Lower leg skin (tissue), 4 donors: ENCODE measurements at regions of chr6 and their contacts with region 1.

Region 1: GRCh38 chr6:44172731-44173500 is 14.3 kb downstream of the CAPN11 start:
- DNase-seq: peak; percentile 86 to 97
- H3K4me3 ChIP-seq: no peak overlapping the region
- CTCF ChIP-seq: peak in 1 of 3 donors; percentile 94
- POLR2A ChIP-seq: no peak

Region 2: DNA sequence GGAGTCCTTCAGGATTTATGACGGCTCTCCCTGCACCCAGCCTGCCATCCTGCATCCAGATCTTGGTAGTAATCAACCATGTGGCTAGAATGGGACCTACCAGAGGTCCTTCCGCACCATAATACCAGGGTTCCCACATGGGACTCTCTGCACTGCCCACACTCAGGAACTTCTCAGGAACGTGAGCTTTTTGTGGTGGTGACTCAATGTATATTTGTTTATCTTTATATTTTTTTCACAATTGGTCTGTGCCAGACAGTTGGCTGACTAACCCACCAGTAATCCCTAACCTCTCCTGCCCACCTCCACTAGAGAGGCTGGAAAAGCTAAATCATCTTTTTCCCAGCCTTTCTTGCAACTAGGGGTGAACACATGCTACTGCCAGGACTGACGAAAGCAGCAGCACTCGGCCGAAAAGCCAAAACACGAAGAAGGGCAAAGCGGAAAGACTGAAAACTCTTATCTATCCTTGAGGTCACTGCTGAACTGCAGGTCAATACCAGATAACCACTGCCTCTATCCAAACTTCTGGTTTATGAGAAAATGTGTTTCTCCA is 1834.2 kb before region 1 on chr6:
- intact Hi-C with region 1: no loop called
- DNase-seq: no peak
- H3K4me3 ChIP-seq: no peak overlapping the region
- CTCF ChIP-seq: no peak
- POLR2A ChIP-seq: no peak

Region 3: GRCh38 chr6:44078795-44079671 is 93.9 kb before region 1 on chr6:
- intact Hi-C with region 1: no loop called
- DNase-seq: peak in 1 of 2 donors; percentile 84
- H3K4me3 ChIP-seq: no peak overlapping the region
- CTCF ChIP-seq: peak in 1 of 3 donors; percentile 91
- POLR2A ChIP-seq: no peak

Region 4: GRCh38 chr6:44237813-44238433 is 65.0 kb after region 1 on chr6:
- intact Hi-C with region 1: loop called (anchors 5 kb)
- DNase-seq: peak; percentile 77 to 96
- H3K4me3 ChIP-seq: peak overlapping the region; percentile 31
- CTCF ChIP-seq: peak in 2 of 3 donors; percentile 51 to 76
- POLR2A ChIP-seq: no peak

Region 5: DNA sequence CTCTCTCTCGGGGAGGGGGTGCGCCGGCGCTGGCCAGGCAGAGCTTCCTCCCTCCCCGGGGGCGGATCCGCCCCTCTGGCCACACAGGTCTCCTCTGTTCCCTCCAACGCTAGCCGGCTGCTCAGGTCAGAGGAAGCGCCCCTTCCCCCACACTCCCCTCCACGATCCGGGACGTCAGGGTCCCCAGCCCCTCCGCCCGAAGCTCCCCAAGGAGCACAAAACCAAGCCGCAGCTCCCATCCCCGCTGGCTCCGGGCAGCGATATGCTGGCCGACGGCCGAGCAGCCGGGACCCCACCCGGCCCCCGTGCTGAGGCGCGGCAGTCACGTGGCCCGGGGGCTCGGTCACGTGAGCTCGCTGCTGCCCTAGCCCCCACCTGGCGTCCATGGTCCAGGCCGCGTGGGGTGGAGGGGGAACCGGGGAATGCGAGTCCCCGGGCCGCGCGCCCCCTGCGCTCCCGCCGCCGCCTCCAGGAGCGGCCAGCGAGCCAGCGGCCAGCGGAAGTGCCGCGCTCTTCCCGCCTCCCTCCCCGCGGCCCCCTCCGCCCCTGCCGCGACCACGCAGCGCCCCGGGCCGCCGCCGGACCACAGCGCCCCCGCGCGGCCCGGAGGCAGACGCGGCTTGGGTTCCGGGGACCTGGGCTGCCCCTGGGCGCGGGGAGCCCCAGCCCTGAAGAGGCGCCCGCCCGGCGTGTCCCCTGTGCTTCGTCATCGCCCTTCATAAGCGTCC is 84.3 kb after region 1 on chr6 and contains the start of gene SLC35B2:
- intact Hi-C with region 1: loop called (anchors 5 kb)
- DNase-seq: peak; percentile 48 to 93
- H3K4me3 ChIP-seq: peak within 1 kb of the TSS; percentile 81
- CTCF ChIP-seq: no peak
- POLR2A ChIP-seq: no peak
- total RNA-seq, gene SLC35B2: 18.0 to 40.6 (median 32.6) TPM